ENCODE measurements at regions of chr14 and their contacts with region 1.

Region 1: DNA sequence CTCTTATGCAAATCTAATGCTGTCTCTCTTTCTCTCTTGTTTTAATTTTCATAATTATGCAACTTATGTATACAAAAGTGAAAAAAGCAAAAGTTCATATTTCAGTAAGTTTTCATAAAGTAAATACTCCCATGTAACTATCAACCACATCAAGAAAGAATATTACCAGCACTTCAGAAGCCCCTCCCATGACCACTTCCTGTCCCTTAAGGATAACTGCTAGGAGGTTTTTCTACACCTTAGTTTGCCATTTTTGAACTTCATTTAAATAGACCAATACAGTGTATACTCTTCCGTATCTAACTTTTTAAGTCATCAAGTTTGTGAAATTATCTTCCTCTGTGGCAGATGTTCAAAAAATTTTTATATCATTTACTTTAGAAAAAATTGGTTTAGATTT is 547 bp upstream of the OR4K15 start:
- DNase-seq: peak in 7 of 9 donors; percentile 43 to 80 (median 74)
- ATAC-seq: peak; percentile 97
- H3K4me3 ChIP-seq: no peak overlapping the region
- H3K4me3 Mint-ChIP-seq: peak overlapping the region in 9 of 10 donors; percentile 42 to 65 (median 60)
- H3K27ac ChIP-seq: no peak overlapping the region
- H3K27ac Mint-ChIP-seq: peak overlapping the region in 8 of 9 donors; percentile 39 to 92 (median 80)
- H3K4me1 ChIP-seq: peaks cover 7 to 24% of the 10 kb centered on the region in 2 donors
- H3K4me1 Mint-ChIP-seq: peaks cover 6 to 55% (median 39%) of the 10 kb centered on the region in 7 donors
- H3K27me3 ChIP-seq: no peaks in the 10 kb centered on the region
- H3K27me3 Mint-ChIP-seq: no peaks in the 10 kb centered on the region

Region 2: DNA sequence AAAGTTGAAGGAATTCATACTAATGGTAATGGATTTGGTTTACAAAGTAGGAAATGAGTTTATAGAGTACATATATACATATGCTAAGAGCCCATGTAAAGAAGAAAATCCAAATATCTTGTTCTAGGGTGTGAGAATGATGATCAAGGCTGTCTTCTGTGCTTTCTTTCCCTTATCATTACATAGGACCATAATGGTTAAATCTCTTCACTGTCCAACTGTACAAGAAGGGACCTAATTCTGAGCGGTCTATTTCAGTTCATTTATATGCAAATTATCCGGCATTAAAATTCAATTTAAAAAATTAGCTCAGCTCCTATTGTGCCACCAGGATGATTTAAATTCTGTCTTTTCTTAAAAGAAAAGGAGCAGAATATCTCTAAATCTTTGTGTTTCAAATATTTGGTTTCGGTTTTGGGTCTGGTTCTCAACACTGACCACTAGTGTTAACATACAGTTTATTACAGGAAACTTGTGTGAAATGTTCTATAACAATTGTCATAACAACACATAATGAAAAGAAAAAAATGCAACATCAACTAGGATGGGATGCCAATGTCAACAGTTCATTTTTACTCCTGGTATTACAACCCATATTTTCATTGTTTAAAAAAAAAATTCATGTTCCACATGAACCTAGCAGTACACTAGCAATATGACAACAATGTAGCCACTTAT is 27.3 kb before region 1 on chr14:
- CTCF ChIA-PET with region 1: no interaction called
- POLR2A ChIA-PET with region 1: no interaction called
- intact Hi-C with region 1: loop called in 1 of 2 experiments (anchors 2 kb)
- DNase-seq: no peak
- ATAC-seq: peak; percentile 44
- H3K4me3 ChIP-seq: no peak overlapping the region
- H3K4me3 Mint-ChIP-seq: no peak overlapping the region
- H3K27ac ChIP-seq: no peak overlapping the region
- H3K27ac Mint-ChIP-seq: no peak overlapping the region
- H3K4me1 ChIP-seq: no peaks in the 10 kb centered on the region
- H3K4me1 Mint-ChIP-seq: peaks cover 0 to 8% (median 0%) of the 10 kb centered on the region in 7 donors
- H3K27me3 ChIP-seq: no peaks in the 10 kb centered on the region
- H3K27me3 Mint-ChIP-seq: no peaks in the 10 kb centered on the region

Region 3: DNA sequence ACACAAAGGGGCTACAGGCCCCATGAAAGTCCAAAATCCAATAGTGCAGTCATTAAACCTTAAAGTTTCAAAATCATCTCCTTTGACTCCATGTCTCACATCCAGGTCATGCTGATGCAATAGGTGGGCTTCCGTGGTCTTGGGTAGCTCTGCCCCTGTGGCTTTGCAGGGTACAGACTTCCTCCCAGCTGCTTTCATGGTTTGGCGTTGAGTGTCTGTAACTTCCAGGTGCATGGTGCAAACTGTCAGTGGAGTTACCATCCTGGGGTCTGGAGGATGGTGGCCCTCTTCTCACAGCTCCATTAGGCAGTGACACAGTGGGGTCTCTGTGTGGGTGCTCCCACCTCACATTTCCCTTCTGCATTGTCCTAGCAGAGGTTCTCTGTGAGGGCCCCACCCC is 18.6 kb after region 1 on chr14:
- CTCF ChIA-PET with region 1: no interaction called
- POLR2A ChIA-PET with region 1: no interaction called
- intact Hi-C with region 1: no loop called
- DNase-seq: no peak
- ATAC-seq: no peak
- H3K4me3 ChIP-seq: no peak overlapping the region
- H3K4me3 Mint-ChIP-seq: no peak overlapping the region
- H3K27ac ChIP-seq: no peak overlapping the region
- H3K27ac Mint-ChIP-seq: no peak overlapping the region
- H3K4me1 ChIP-seq: no peaks in the 10 kb centered on the region
- H3K4me1 Mint-ChIP-seq: peaks cover 0 to 8% (median 0%) of the 10 kb centered on the region in 7 donors
- H3K27me3 ChIP-seq: no peaks in the 10 kb centered on the region
- H3K27me3 Mint-ChIP-seq: no peaks in the 10 kb centered on the region

Measured in naive thymus-derived CD4-positive, alpha-beta T cell (primary cell).